Ascending aorta (tissue), 2 donors: ENCODE measurements at regions of chr9 and their contacts with region 1.

Region 1: DNA sequence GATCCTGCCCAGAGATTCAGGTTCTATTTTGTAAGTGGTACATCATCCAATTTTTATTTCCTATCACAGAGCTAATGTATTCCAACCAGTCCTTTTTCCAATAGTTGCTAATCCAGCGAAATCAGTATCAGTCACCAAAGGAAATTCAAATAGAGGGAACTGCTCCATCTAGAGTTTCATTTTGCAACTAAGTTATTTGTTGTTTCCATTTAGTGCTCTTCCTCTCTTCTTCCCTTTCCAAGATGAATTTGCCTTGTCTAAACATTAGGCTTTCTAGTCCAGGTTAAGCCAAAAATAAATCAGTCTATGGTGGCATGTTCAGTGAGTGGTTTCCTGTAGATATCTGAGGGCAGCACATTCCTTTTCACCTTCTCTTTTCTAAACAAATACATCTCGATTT is 79.8 kb upstream of the SPATA31D4 start:
- DNase-seq: no peak
- H3K4me3 ChIP-seq: no peak overlapping the region
- H3K27ac ChIP-seq: no peak overlapping the region
- H3K4me1 ChIP-seq: no peaks in the 10 kb centered on the region
- H3K27me3 ChIP-seq: no peaks in the 10 kb centered on the region
- CTCF ChIP-seq: peak in 2 of 3 experiments; percentile 33 to 66

Region 2: GRCh38 chr9:81492710-81493447 is 355.6 kb before region 1 on chr9:
- intact Hi-C with region 1: loop called (anchors 10 kb)
- DNase-seq: no peak
- H3K4me3 ChIP-seq: no peak overlapping the region
- H3K27ac ChIP-seq: no peak overlapping the region
- H3K4me1 ChIP-seq: peaks cover 0 to 16% of the 10 kb centered on the region in 2 donors
- H3K27me3 ChIP-seq: no peaks in the 10 kb centered on the region
- CTCF ChIP-seq: no peak

Region 3: GRCh38 chr9:81588148-81588871 is 260.2 kb before region 1 on chr9:
- intact Hi-C with region 1: loop called (anchors 2 kb)
- DNase-seq: peak; percentile 49 to 93
- H3K4me3 ChIP-seq: peak overlapping the region in 1 of 2 donors; percentile 11
- H3K27ac ChIP-seq: peak overlapping the region; percentile 83 to 90
- H3K4me1 ChIP-seq: peaks cover 27 to 58% of the 10 kb centered on the region in 2 donors
- H3K27me3 ChIP-seq: no peaks in the 10 kb centered on the region
- CTCF ChIP-seq: no peak

Region 4: DNA sequence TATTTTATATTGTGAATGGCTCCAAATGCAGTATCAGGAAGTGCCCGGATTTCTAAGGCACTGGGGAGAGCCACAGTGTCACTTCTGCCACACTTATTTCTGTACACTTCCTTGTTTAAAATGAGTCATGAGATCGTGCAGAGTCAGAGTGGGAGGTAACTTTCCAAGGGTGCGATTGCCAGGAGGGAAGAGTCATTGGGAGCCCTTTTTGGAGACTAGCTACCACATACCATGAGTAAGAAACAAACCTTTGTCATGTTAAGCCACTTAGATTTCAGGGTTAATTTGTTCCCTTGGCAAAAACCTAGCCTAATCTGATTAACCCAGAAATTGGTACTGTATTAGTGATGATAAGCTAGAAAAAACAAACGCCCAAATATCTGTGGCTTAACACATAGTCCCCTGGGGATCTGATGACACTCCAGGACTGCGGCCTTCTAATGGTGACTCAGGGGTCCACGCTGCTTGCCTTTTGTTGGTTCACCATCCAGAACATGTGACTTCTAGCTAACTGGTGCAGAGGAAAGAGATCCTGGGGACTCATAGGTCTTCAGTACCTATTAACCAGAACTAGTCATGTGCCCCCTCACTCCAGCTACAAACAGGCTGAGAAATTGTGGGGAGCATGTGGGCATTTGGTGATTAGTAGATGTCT is 110.5 kb before region 1 on chr9:
- intact Hi-C with region 1: loop called (anchors 5 kb)
- DNase-seq: peak; percentile 41 to 88
- H3K4me3 ChIP-seq: no peak overlapping the region
- H3K27ac ChIP-seq: peak overlapping the region in 1 of 2 donors; percentile 52
- H3K4me1 ChIP-seq: peaks cover 0 to 6% of the 10 kb centered on the region in 2 donors
- H3K27me3 ChIP-seq: no peaks in the 10 kb centered on the region
- CTCF ChIP-seq: no peak

Region 5: DNA sequence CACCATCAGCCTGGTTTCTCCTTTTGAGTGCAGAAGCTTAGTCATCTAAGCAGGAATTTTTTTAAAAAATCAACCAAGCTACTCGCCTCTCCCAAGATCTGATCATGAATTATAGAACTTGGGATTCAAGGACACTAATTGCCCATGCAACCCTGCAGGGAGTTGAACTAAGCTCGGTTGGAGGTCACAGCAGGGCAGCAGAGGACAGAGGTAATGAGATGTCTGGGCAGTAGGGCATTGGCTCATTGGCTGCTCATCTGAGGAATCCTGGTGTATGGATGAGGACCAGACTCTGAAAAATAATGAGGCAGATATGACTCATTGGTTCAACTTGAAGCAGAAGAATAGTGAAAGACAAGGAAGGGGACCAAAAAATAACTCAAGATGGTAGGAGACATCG is 47.3 kb before region 1 on chr9:
- intact Hi-C with region 1: no loop called
- DNase-seq: no peak
- H3K4me3 ChIP-seq: no peak overlapping the region
- H3K27ac ChIP-seq: peak overlapping the region in 1 of 2 donors; percentile 22
- H3K4me1 ChIP-seq: peaks cover 0 to 7% of the 10 kb centered on the region in 2 donors
- H3K27me3 ChIP-seq: no peaks in the 10 kb centered on the region
- CTCF ChIP-seq: no peak

Region 6: DNA sequence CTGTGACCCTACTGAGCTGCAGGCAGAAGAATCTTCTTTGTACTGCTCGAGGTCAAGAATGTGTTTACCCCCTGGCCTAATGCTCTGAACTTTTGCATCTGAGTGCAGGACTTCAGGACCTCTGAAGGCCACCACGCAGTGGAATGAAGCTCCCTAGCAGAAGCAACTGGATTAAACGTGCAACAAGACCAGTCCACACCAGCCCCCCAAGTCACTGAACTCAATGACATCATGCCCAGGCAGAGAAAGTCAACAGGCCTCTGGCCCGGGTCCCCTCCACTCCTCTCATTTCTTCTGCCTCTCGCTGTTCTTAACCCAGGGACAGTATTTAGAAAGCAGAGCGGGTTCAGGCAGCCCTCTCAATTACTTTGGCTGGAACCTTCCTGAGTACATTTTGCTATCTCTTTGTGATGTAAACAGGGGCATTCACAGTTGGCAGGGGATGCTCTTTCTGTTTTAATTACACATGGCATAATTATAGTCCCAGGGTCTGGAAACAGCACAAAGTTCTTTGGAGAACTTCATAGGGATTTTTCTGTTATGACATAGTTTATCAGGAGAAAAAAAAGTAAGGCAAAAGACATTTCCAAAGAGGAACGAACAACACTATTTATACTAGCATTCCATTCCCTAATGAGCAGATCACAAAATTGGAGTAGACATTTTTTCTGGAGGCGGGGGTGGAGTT is 28.5 kb before region 1 on chr9:
- intact Hi-C with region 1: loop called (anchors 2 kb)
- DNase-seq: no peak
- H3K4me3 ChIP-seq: no peak overlapping the region
- H3K27ac ChIP-seq: peak overlapping the region; percentile 42 to 70
- H3K4me1 ChIP-seq: peaks cover 0 to 25% of the 10 kb centered on the region in 2 donors
- H3K27me3 ChIP-seq: no peaks in the 10 kb centered on the region
- CTCF ChIP-seq: no peak